PC-9 (cell line): ENCODE measurements at regions of chr20 and their contacts with region 1.

Region 1: GRCh38 chr20:59082077-59082740 is 39.6 kb upstream of the PRELID3B start:
- DNase-seq: peak in 1 of 2 experiments; percentile 61
- H3K4me3 ChIP-seq: no peak overlapping the region
- H3K27ac ChIP-seq: peak overlapping the region; percentile 69
- H3K4me1 ChIP-seq: peaks cover 33% of the 10 kb centered on the region
- H3K27me3 ChIP-seq: no peaks in the 10 kb centered on the region
- CTCF ChIP-seq: peak; percentile 42

Region 2: DNA sequence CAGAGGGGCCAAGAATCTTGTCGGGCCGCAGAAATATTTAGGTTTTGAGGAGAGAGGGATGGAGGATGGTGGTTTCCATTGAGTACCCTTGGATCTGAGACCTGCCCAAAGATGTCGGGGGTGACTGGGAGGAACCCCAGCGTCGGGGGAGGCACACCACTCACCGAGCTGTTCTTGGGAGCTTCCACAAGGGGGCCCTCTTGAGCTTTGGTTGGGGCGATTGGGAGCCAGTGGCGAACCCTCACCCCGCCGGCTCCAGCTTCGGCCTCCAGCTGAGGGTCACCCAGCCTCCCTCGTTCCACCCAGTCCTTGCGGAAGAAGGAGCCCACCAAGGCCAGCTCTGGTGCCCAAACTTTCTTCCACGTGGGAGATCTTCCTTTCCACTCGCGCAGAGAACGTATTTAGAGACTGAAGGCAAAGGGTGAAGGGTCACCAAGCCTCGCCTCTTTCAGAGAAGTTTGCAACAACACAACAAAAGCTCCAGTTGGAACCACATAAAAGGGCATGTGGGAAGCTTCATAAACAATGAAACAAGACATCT is 600.7 kb before region 1 on chr20:
- CTCF ChIA-PET with region 1: no interaction called
- POLR2A ChIA-PET with region 1: no interaction called
- intact Hi-C with region 1: no loop called
- DNase-seq: peak; percentile 49 to 50
- H3K4me3 ChIP-seq: no peak overlapping the region
- H3K27ac ChIP-seq: no peak overlapping the region
- H3K4me1 ChIP-seq: no peaks in the 10 kb centered on the region
- H3K27me3 ChIP-seq: no peaks in the 10 kb centered on the region
- CTCF ChIP-seq: peak; percentile 91

Region 3: GRCh38 chr20:59010995-59011873 is 71.0 kb before region 1 on chr20:
- CTCF ChIA-PET with region 1: no interaction called
- POLR2A ChIA-PET with region 1: no interaction called
- intact Hi-C with region 1: loop called (anchors 2 kb)
- DNase-seq: peak; percentile 90 to 91
- H3K4me3 ChIP-seq: peak overlapping the region; percentile 12; the same call in 1 of the 2 replicates
- H3K27ac ChIP-seq: peak overlapping the region; percentile 68
- H3K4me1 ChIP-seq: peaks cover 44% of the 10 kb centered on the region
- H3K27me3 ChIP-seq: no peaks in the 10 kb centered on the region
- CTCF ChIP-seq: no peak

Region 4: GRCh38 chr20:59063358-59064213 is 18.6 kb before region 1 on chr20:
- CTCF ChIA-PET with region 1: no interaction called
- POLR2A ChIA-PET with region 1: interaction called, 8 read pairs
- intact Hi-C with region 1: loop called (anchors 2 kb)
- DNase-seq: peak; percentile 49 to 80
- H3K4me3 ChIP-seq: peak overlapping the region; percentile 6; the same call in 1 of the 2 replicates
- H3K27ac ChIP-seq: peak overlapping the region; percentile 21
- H3K4me1 ChIP-seq: peaks cover 16% of the 10 kb centered on the region
- H3K27me3 ChIP-seq: no peaks in the 10 kb centered on the region
- CTCF ChIP-seq: no peak

Region 5: DNA sequence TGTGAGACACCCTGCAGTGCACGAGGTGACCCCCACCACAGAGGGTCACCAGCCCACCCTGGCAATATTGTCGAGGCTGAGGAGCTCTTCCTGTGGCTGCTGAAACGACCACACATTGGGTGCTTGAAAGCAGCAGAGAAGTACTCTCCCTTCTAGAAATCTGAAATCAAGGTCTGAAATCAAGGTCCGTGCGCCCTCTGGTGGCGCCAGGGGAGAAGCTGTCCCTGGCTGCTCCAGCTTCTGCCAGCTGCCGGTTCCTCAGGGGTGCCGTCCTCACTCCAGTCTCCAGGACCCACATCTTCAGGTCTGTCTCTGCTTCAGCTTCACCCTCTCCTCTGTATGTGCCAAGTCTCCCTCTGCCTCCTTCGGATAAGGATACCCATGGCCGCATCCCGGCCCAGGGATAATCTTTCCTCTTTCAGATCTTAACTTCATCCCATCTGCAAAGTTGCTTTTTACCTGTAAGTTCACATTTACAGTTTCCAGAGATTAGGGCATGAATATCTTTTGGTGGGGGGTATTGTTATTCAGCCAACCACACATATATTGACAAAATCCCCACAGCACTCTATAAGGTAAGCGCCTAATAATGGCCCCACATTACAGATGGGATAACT is 413.8 kb after region 1 on chr20:
- CTCF ChIA-PET with region 1: interaction called, 10 read pairs
- POLR2A ChIA-PET with region 1: no interaction called
- intact Hi-C with region 1: no loop called
- DNase-seq: peak; percentile 40 to 64
- H3K4me3 ChIP-seq: no peak overlapping the region
- H3K27ac ChIP-seq: no peak overlapping the region
- H3K4me1 ChIP-seq: no peaks in the 10 kb centered on the region
- H3K27me3 ChIP-seq: peaks cover 84% of the 10 kb centered on the region
- CTCF ChIP-seq: peak; percentile 95